ENCODE measurements at regions of chr3 and their contacts with region 1.

Region 1: DNA sequence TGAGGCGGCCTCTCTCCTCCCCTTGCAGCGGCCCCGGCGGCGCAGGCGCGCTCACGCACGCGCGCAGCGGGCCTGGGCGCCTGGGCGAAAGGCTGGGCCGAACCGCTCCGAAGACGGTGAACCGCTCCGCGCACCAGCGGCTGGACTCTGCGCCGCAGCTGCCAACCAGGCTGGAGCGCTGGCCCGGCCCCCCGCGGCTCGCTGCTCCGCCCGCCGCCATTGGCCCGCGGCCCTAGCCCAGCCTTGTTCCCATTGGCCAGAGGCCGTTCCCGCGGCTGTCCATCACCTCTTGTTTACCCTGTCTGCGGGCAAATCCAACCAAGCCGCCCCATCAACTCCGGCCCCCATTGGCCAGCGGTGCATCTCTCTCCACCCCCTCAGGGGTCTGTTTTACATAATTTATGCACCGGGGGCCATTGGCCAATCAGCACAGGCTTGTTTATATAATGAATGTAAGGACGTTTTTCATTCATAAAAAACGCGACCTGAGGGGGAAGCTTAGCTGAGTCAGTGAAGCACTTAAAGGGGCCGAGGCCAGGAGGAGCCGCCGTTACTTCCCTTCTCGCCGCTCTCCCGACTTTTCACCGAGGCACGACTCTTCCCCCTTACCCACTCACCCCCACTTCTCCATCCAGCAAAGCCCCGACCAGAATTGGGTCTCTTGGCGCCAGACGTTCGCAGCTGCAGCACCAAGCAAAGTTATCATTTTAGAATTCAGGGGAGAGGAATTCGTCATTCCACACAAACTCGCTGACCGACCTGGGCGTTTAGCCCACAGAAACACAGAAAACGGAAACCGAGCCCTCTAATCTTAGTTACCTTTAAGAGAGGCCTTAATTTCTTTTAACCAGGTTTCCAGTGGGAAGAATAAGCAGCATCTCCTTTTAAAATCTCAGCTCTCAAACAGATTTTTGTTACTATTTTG is at the start of gene ETV5:
- DNase-seq: peak; percentile 100
- H3K4me3 ChIP-seq: peak within 1 kb of the TSS; percentile 67 to 69
- H3K27ac ChIP-seq: peak within 1 kb of the TSS; percentile 77 to 81
- H3K4me1 ChIP-seq: peaks cover 0 to 31% (median 23%) of the 10 kb centered on the region in 4 donors
- H3K27me3 ChIP-seq: no peaks in the 10 kb centered on the region
- CTCF ChIP-seq: no peak

Region 2: DNA sequence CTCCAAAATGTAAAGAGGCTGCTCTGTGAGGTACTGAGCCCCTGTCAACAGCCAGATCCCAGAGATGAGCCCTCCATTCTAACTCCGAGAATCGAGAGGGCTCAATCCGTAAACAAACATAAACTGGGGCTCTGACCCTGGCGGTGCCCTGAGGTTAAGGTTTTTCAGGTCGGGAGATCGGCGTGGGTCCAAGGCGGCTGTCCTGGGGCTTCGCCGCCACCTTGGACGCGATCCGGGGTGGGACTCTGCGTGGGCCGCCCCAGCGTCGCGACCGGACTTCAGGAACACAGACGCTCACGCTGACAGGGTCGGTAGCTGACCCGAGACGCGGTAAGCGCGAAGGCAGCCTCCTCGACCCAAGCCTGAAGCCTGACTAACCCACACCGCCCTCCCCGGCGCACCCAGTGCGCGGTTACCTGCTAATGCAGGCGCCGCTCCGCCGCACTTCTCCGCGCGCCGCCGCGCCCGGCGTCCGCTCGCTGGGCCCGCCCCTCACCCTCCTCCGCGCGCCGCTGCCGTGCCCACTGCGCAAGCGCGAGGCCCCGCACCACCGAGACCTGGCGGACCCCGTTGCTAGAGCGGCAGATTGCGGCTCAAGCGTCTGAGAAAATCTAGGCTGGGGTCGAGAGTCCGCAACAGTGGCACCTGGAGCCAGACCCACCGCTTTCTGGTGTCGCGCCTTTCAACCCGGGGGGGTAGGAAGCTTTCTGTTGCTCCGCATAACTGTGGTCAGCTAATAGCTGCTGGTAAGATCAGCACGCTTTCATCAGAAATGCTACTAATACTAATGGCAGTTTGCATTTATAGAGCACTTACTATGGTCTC is 457.9 kb after region 1 on chr3 and contains the start of gene TBCCD1:
- intact Hi-C with region 1: loop called (anchors 10 kb)
- DNase-seq: peak; percentile 87 to 93
- H3K4me3 ChIP-seq: peak within 1 kb of the TSS; percentile 96 to 99
- H3K27ac ChIP-seq: peak within 1 kb of the TSS; percentile 88
- H3K4me1 ChIP-seq: peaks cover 0 to 59% (median 40%) of the 10 kb centered on the region in 4 donors
- H3K27me3 ChIP-seq: no peaks in the 10 kb centered on the region
- CTCF ChIP-seq: no peak